Activated CD8-positive, alpha-beta T cell treated with anti-CD3 and anti-CD28 coated beads for 36 hours (primary cell): ENCODE measurements at regions of chr11 and their contacts with region 1.

Region 1: GRCh38 chr11:3091791-3092602 is 34.8 kb upstream of the CARS1 start:
- DNase-seq: peak; percentile 79
- ATAC-seq: peak; percentile 96
- H3K4me3 Mint-ChIP-seq: no peak overlapping the region
- H3K27ac Mint-ChIP-seq: no peak overlapping the region
- H3K4me1 Mint-ChIP-seq: no peaks in the 10 kb centered on the region
- H3K27me3 Mint-ChIP-seq: no peaks in the 10 kb centered on the region
- CTCF ChIP-seq: peak; percentile 93

Region 2: DNA sequence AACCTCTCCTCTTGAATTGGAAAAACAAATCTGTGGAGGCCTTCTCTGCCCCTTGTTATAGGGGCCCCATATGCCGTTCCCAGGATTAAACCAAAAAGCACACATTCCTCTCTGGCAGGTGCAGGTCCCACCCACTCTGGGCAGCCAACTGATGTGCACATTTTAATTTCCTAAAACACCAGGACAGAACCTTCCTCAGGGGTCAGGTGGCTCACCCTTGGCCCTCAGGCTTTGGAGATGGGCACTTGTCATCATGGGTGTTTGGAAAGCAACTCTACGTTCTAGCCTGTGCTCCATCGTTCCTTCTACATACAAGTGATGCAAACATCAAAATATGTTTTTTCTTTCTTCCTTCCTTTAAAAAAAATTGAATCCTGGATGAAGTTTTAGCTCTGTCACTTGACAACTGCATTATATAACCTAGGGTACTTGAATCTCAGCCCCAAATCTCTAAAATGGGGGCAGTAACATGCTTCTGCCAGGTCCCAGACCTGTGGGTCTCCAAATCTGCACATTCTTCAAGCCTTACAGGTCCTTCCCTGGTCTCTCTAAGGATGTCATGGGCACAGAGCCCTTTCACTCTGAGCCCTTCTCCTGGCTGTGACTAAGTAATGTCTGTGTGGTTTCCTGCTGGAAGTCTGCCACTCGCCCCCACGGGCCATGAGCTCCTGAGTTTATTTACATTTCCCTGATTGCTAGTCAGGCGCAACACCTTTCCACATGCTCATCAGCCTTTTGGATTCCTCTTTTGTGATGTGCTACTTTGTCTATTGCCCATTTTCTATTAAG is 436.0 kb before region 1 on chr11:
- CTCF ChIA-PET with region 1: no interaction called
- POLR2A ChIA-PET with region 1: no interaction called
- intact Hi-C with region 1: no loop called
- DNase-seq: peak; percentile 15
- ATAC-seq: no peak
- H3K4me3 Mint-ChIP-seq: no peak overlapping the region
- H3K27ac Mint-ChIP-seq: no peak overlapping the region
- H3K4me1 Mint-ChIP-seq: peaks cover 3% of the 10 kb centered on the region
- H3K27me3 Mint-ChIP-seq: no peaks in the 10 kb centered on the region
- CTCF ChIP-seq: no peak

Region 3: DNA sequence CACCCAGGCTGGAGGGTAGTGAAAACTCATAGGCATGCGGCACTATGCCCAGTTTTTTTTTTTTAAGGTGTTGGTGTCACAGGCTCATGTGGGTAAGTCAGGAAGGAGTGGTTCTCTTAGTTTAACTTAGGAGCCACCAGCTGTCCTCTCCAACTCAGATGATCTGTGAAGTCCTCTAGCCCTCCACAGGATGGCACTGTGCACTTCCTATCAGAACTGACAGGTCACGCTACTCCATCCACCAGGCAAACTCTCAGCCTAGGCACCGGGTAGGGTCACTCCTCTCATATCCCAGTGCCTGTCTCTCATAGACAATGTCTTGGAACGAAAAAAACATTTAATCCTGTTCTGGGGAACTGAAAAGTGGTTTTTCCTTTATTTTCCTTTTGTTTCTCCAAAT is 116.4 kb before region 1 on chr11:
- CTCF ChIA-PET with region 1: interaction called, 19 read pairs
- POLR2A ChIA-PET with region 1: interaction called, 4 read pairs
- intact Hi-C with region 1: no loop called
- DNase-seq: peak; percentile 57
- ATAC-seq: peak; percentile 94
- H3K4me3 Mint-ChIP-seq: no peak overlapping the region
- H3K27ac Mint-ChIP-seq: peak overlapping the region; percentile 8
- H3K4me1 Mint-ChIP-seq: peaks cover 44% of the 10 kb centered on the region
- H3K27me3 Mint-ChIP-seq: no peaks in the 10 kb centered on the region
- CTCF ChIP-seq: peak; percentile 59

Region 4: GRCh38 chr11:3037040-3037944 is 54.7 kb before region 1 on chr11:
- CTCF ChIA-PET with region 1: interaction called, 49 read pairs
- POLR2A ChIA-PET with region 1: no interaction called
- intact Hi-C with region 1: no loop called
- DNase-seq: peak; percentile 70
- ATAC-seq: peak; percentile 75
- H3K4me3 Mint-ChIP-seq: no peak overlapping the region
- H3K27ac Mint-ChIP-seq: no peak overlapping the region
- H3K4me1 Mint-ChIP-seq: peaks cover 17% of the 10 kb centered on the region
- H3K27me3 Mint-ChIP-seq: no peaks in the 10 kb centered on the region
- CTCF ChIP-seq: peak; percentile 65

Region 5: GRCh38 chr11:3057069-3057963 is 34.7 kb before region 1 on chr11 and contains the start of gene CARS1:
- CTCF ChIA-PET with region 1: interaction called, 16 read pairs
- POLR2A ChIA-PET with region 1: no interaction called
- intact Hi-C with region 1: no loop called
- DNase-seq: peak; percentile 96
- ATAC-seq: peak; percentile 98
- H3K4me3 Mint-ChIP-seq: peak within 1 kb of the TSS; percentile 91
- H3K27ac Mint-ChIP-seq: peak within 1 kb of the TSS; percentile 90
- H3K4me1 Mint-ChIP-seq: peaks cover 37% of the 10 kb centered on the region
- H3K27me3 Mint-ChIP-seq: peaks cover 1% of the 10 kb centered on the region
- CTCF ChIP-seq: no peak
- total RNA-seq, gene CARS1: 82.7 to 88.2 TPM

Region 6: DNA sequence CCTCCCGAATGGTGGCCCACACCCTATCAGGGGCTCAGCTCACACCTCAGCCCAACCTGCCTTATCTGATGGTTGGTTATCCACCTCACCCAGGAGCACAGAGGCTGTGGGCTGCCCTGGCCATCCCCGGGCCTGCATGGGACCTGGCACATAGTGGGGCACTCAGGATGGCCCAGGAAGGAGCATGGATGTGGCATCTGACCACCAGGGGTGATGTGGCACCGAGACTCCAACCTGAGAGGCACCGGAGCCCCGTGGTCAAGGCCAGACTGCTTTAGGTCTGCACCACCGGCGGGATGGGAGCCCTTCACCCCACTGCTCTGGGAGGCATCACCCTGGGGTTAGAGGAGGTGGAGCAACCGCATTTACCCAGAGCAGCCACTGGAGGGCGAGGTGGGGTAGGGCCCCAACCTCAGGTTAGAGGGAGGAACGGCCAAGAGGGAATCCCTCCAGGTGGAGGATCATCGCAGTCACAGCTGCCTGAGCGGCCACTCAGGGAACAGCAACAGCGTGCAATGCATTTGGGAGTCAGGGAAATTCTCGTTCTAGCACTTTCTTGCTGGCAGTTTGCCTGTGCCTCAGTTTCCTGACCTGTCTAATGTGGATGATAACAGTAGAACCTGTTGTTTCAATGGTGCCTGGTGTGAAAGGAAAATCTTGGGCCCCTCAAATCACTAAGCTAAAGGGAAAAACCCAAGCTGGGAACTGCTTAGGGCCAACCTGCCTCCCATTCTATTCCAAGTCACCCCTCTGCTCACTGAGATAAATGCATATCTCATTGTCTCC is 18.1 kb after region 1 on chr11:
- CTCF ChIA-PET with region 1: interaction called, 15 read pairs
- POLR2A ChIA-PET with region 1: no interaction called
- intact Hi-C with region 1: no loop called
- DNase-seq: peak; percentile 63
- ATAC-seq: peak; percentile 99
- H3K4me3 Mint-ChIP-seq: no peak overlapping the region
- H3K27ac Mint-ChIP-seq: no peak overlapping the region
- H3K4me1 Mint-ChIP-seq: no peaks in the 10 kb centered on the region
- H3K27me3 Mint-ChIP-seq: no peaks in the 10 kb centered on the region
- CTCF ChIP-seq: peak; percentile 75

Region 7: DNA sequence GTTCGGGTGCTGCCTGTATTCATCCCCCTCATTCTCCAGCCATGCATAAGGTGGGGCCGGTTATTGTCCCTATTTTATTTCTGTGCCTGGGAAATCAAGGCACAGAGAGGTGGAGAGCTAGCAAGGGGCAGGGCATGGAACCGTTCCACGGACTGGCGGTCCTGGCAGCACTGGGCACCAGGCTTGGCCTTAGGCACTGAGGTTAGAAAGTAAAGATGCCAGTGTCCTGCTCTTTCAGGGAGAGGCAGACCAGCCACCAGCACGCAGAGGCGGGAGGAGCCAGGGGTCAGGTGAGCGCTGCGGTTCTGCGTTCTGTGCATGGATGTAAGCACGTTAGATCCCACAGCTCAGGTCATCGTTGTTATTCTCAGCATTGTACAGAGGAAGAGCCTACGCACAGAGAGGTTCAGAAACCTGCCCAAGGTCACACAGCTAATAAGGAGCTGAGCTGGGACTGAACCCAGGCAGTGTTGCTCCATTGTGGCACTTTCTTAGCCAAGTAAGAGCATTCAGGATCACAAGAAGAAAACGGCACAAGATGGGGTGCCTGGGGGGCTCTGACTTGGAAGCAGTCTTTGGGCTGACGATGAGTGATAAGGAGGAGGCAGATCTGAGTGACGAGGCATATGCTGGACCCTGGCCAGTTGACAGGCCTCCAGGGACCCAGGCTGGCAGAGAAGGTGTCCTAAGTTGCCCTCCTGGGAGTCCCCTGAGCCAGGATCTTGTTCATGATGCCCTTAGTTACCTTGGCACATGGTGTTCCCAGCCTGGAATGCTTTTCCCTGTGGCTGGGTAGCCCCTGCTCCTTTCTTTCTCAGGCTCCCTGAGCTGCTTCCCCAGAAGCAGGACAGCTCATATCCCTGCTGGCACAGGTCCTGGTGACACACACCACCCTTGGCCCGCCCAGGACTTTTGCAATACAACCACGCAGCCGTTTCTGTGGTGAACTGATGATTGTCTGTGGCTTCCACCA is 32.0 kb after region 1 on chr11:
- CTCF ChIA-PET with region 1: no interaction called
- POLR2A ChIA-PET with region 1: no interaction called
- intact Hi-C with region 1: no loop called
- DNase-seq: no peak
- ATAC-seq: no peak
- H3K4me3 Mint-ChIP-seq: no peak overlapping the region
- H3K27ac Mint-ChIP-seq: no peak overlapping the region
- H3K4me1 Mint-ChIP-seq: no peaks in the 10 kb centered on the region
- H3K27me3 Mint-ChIP-seq: no peaks in the 10 kb centered on the region
- CTCF ChIP-seq: no peak

Region 8: GRCh38 chr11:3177931-3178330 is 85.9 kb after region 1 on chr11:
- CTCF ChIA-PET with region 1: no interaction called
- POLR2A ChIA-PET with region 1: no interaction called
- intact Hi-C with region 1: no loop called
- DNase-seq: no peak
- ATAC-seq: no peak
- H3K4me3 Mint-ChIP-seq: no peak overlapping the region
- H3K27ac Mint-ChIP-seq: no peak overlapping the region
- H3K4me1 Mint-ChIP-seq: no peaks in the 10 kb centered on the region
- H3K27me3 Mint-ChIP-seq: peaks cover 3% of the 10 kb centered on the region
- CTCF ChIP-seq: no peak

Region 9: GRCh38 chr11:3220521-3221407 is 128.8 kb after region 1 on chr11:
- CTCF ChIA-PET with region 1: no interaction called
- POLR2A ChIA-PET with region 1: no interaction called
- intact Hi-C with region 1: no loop called
- DNase-seq: no peak
- ATAC-seq: no peak
- H3K4me3 Mint-ChIP-seq: no peak overlapping the region
- H3K27ac Mint-ChIP-seq: no peak overlapping the region
- H3K4me1 Mint-ChIP-seq: peaks cover 10% of the 10 kb centered on the region
- H3K27me3 Mint-ChIP-seq: peaks cover 4% of the 10 kb centered on the region
- CTCF ChIP-seq: no peak